ENCODE measurements at regions of chr3 and their contacts with region 1.

Region 1: DNA sequence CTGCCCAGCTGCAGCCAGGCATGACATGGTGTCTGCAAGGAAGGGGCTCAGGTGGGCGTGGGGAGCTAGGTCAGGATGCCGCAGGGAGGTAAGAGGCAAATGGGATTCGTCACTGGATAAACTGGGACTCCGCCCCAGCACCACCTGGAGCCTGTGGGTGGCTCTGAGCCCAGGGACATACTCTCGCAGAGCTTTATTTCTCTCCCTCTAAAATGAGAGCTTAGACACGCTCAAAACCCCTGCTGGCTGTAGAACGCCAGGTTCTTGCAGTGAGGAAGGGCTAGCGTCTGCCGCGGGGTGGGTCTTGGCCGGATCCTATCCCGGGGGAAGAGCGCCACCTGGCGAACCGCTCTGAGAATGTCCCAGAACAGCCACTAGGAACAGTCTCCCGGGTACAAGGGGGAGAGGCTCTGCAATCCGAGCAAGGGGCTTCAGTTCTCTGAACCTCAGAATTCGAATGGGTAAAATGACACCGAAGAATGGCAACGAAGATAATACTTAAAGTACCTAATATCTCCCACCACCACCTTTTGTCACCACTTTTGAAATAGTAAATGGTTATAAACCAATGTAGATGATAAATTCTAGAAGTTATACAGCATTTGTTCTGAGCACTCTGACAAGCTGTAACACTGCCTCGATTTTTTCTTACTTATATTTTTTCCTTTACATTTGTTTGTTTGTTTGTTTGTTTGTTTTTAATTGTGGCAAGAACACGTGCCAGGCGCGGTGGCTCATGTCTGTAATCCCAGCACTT is 53.2 kb upstream of the SRGAP3 start:
- DNase-seq: peak; percentile 79
- H3K4me3 ChIP-seq: peak overlapping the region; percentile 32
- H3K27ac ChIP-seq: no peak overlapping the region
- H3K4me1 ChIP-seq: peaks cover 5% of the 10 kb centered on the region
- H3K27me3 ChIP-seq: no peaks in the 10 kb centered on the region
- CTCF ChIP-seq: peak; percentile 86

Region 2: GRCh38 chr3:8970971-8971589 is 331.5 kb before region 1 on chr3:
- intact Hi-C with region 1: loop called (anchors 2 kb)
- DNase-seq: peak; percentile 77
- H3K4me3 ChIP-seq: no peak overlapping the region
- H3K27ac ChIP-seq: no peak overlapping the region
- H3K4me1 ChIP-seq: no peaks in the 10 kb centered on the region
- H3K27me3 ChIP-seq: no peaks in the 10 kb centered on the region
- CTCF ChIP-seq: peak; percentile 93

Region 3: DNA sequence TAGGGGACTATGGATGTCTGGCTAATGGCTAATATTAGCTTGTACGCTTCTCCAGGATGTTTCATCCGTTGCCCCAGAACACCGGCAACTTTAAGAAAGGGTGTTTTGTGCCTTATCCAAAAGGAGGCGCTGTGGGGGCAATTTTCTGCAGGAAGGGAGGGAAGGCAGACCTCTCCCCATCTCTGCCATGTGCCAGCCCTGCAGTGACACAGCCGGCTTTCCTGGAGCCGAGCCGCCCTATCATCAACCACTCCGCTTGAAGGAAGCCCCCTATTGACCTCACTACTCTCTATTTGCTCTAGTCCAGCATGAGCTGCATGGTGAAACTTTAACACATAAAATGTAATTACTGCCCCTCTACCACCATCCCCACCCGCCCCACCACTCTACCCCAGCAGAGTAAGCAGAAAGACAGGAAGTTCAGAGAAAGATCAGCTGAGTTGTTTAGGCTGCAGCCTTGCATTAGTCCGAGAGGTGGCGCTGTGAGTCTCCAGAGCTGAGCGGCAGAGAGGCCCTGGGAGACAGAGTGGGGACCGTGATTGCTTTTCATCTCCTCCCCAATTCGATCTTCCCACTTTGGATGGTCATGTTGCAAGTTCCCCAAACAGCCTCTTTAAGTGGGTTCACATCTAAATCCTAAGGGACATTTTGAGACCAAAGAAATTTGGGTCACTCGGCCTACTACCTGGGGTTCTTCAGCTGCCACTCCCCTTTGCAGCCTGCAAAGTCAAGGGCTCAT is 314.8 kb before region 1 on chr3:
- intact Hi-C with region 1: loop called (anchors 5 kb)
- DNase-seq: peak; percentile 57
- H3K4me3 ChIP-seq: no peak overlapping the region
- H3K27ac ChIP-seq: no peak overlapping the region
- H3K4me1 ChIP-seq: no peaks in the 10 kb centered on the region
- H3K27me3 ChIP-seq: no peaks in the 10 kb centered on the region
- CTCF ChIP-seq: peak; percentile 78

Region 4: DNA sequence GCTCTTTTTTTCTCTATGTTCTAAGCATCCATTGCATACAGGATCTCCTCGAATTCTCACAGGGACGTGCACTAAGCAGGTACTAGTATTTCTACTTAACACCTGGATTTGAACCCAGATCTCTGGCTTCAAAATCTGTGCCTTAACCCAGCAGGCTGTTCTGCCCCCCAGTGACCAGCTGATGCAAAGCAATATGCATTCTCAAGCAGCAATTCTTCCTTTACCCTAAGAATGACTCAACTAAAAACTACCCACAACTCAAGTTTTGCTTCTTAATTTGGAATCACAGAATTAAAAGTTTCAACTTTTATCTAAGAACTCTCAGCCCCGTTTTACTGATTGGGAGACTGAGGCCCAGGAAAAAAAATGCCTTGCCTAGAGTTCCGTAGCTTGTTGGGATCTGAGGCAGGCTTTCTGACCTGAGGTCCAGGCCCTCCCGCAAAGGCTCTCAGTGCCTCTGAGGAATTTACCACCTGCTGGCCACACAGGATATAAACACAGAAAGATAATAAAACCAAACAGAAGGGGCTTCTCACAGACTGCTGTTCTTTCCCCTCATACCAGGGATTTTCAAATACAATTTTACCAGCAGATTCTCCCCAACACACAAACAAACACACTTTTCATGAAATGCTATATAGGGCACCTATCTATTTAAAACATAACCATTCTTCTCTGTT is 223.9 kb before region 1 on chr3:
- intact Hi-C with region 1: loop called (anchors 10 kb)
- DNase-seq: no peak
- H3K4me3 ChIP-seq: no peak overlapping the region
- H3K27ac ChIP-seq: no peak overlapping the region
- H3K4me1 ChIP-seq: no peaks in the 10 kb centered on the region
- H3K27me3 ChIP-seq: no peaks in the 10 kb centered on the region
- CTCF ChIP-seq: no peak

Measured in colonic mucosa (tissue), 4 donors.